GM12878 (cell line): ENCODE measurements at regions of chr5 and their contacts with region 1.

Region 1: GRCh38 chr5:34898258-34898895 is 16.9 kb downstream of the RAD1 start:
- DNase-seq: no peak
- ATAC-seq: peak; percentile 94
- H3K4me3 ChIP-seq: no peak overlapping the region
- H3K27ac ChIP-seq: no peak overlapping the region
- H3K4me1 ChIP-seq: no peaks in the 10 kb centered on the region
- H3K27me3 ChIP-seq: no peaks in the 10 kb centered on the region
- CTCF ChIP-seq: peak; percentile 77 to 82 (median 79)
- EP300 ChIP-seq: no peak
- POLR2A ChIP-seq: no peak
- RAD21 ChIP-seq: peak; percentile 90

Region 2: GRCh38 chr5:34533582-34534522 is 364.5 kb before region 1 on chr5:
- CTCF ChIA-PET with region 1: interaction called, 18 read pairs
- POLR2A ChIA-PET with region 1: interaction called, 3 read pairs
- RAD21 ChIA-PET with region 1: interaction called, 3 read pairs
- SMC1A ChIA-PET with region 1: interaction called, 10 read pairs
- in situ Hi-C with region 1: loop called (anchors 5 kb)
- intact Hi-C with region 1: no loop called
- DNase-seq: no peak
- ATAC-seq: peak; percentile 74
- H3K4me3 ChIP-seq: no peak overlapping the region
- H3K27ac ChIP-seq: peak overlapping the region; percentile 42
- H3K4me1 ChIP-seq: peaks cover 21% of the 10 kb centered on the region
- H3K27me3 ChIP-seq: no peaks in the 10 kb centered on the region; a peak in 1 of 4 replicates
- CTCF ChIP-seq: no peak
- EP300 ChIP-seq: no peak
- POLR2A ChIP-seq: no peak
- RAD21 ChIP-seq: no peak

Region 3: GRCh38 chr5:34709861-34710673 is 188.3 kb before region 1 on chr5:
- CTCF ChIA-PET with region 1: no interaction called
- POLR2A ChIA-PET with region 1: no interaction called
- RAD21 ChIA-PET with region 1: no interaction called
- SMC1A ChIA-PET with region 1: no interaction called
- in situ Hi-C with region 1: no loop called
- intact Hi-C with region 1: no loop called
- DNase-seq: no peak
- ATAC-seq: no peak
- H3K4me3 ChIP-seq: no peak overlapping the region
- H3K27ac ChIP-seq: no peak overlapping the region
- H3K4me1 ChIP-seq: no peaks in the 10 kb centered on the region
- H3K27me3 ChIP-seq: peaks cover 0 to 2% of the 10 kb centered on the region in 2 experiments; a peak in 1 of 4 replicates
- CTCF ChIP-seq: no peak
- EP300 ChIP-seq: no peak
- POLR2A ChIP-seq: no peak
- RAD21 ChIP-seq: no peak